AG04449 (cell line): ENCODE measurements at regions of chr1 and their contacts with region 1.

Region 1: GRCh38 chr1:223123011-223123610 is 19.9 kb downstream of the TLR5 start:
- DNase-seq: no peak
- H3K4me3 ChIP-seq: no peak overlapping the region
- CTCF ChIP-seq: no peak

Region 2: DNA sequence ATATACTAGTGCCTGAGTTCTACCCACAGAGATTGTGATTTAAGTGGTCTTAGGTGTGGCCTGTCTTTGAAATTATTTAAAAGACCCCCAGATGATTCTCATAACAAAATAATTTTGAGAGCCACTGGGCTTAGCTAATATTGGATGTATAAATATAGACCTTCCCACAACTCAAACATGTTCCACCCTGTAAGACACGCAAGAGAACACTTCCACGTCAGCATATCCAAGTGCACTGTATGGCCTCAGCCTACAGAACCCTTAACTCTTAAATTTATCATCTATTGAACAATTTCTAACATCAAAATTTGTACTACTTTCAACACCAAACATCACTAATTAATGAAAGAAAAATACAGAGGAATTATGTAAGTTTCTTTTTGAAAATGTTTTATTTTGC is 383.6 kb before region 1 on chr1:
- CTCF ChIA-PET with region 1: interaction called, 11 read pairs
- POLR2A ChIA-PET with region 1: no interaction called
- DNase-seq: no peak
- H3K4me3 ChIP-seq: no peak overlapping the region
- CTCF ChIP-seq: no peak

Region 3: GRCh38 chr1:222792744-222793143 is 330.4 kb before region 1 on chr1:
- CTCF ChIA-PET with region 1: interaction called, 53 read pairs
- POLR2A ChIA-PET with region 1: no interaction called
- DNase-seq: no peak
- H3K4me3 ChIP-seq: no peak overlapping the region
- CTCF ChIP-seq: peak; percentile 20

Region 4: DNA sequence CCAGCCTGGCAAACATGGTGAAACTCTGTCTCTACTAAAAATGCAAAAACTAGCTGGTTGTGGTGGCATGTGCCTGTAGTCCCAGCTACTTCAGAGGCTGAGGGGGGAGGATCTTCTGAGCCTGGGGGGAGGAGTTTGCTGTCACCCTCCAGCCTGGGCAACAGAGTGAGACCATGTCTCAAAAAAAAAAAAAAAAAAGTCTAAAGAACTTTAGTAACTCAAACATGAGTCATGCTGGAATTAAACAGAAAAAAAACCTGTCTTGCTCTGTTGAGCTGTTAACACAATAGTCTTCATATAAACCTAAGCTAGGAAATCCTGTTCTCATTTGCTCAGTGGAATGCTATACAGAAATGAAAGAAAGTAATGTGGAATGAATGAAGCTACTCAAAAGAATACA is 325.0 kb before region 1 on chr1:
- CTCF ChIA-PET with region 1: interaction called, 53 read pairs
- POLR2A ChIA-PET with region 1: no interaction called
- DNase-seq: no peak
- H3K4me3 ChIP-seq: no peak overlapping the region
- CTCF ChIP-seq: no peak

Region 5: DNA sequence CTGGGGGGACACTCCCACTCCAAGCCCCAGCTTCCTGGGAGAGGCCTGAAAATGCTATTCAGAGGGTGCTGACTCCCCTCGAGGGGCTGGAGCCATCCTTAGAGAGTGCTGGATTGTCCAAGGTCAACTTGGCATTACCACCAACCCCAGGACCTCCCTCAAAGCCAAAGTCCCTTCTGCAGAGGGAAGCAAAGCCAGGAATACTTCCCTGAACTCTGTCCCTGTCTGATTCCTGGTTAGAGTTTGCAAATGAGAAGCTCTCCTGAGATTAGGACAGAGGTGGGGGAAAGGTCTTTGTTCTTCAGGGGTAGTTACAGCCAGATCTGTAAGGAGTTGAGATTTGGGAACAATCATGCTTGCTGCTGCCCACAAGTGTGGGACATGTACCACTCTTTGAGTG is 25.4 kb before region 1 on chr1:
- CTCF ChIA-PET with region 1: interaction called, 11 read pairs
- POLR2A ChIA-PET with region 1: no interaction called
- DNase-seq: no peak
- H3K4me3 ChIP-seq: no peak overlapping the region
- CTCF ChIP-seq: no peak

Region 6: GRCh38 chr1:223102797-223103533 is 20.1 kb before region 1 on chr1:
- CTCF ChIA-PET with region 1: interaction called, 27 read pairs
- POLR2A ChIA-PET with region 1: no interaction called
- DNase-seq: no peak
- H3K4me3 ChIP-seq: no peak overlapping the region
- CTCF ChIP-seq: no peak